ENCODE measurements at regions of chrX and their contacts with region 1.

Region 1: GRCh38 chrX:18674788-18675735 is 3.2 kb upstream of the RS1 start:
- DNase-seq: peak; percentile 77 to 92 (median 91)
- ATAC-seq: peak; percentile 94 to 96
- H3K4me3 ChIP-seq: peak overlapping the region; percentile 79
- H3K27ac ChIP-seq: peak overlapping the region; percentile 78
- H3K4me1 ChIP-seq: no peaks in the 10 kb centered on the region
- H3K27me3 ChIP-seq: no peaks in the 10 kb centered on the region

Region 2: GRCh38 chrX:18886344-18887161 is 211.5 kb after region 1 on chrX:
- intact Hi-C with region 1: loop called in 2 of 4 experiments (anchors 10 kb)
- DNase-seq: peak; percentile 85 to 90 (median 88)
- ATAC-seq: peak; percentile 84 to 89
- H3K4me3 ChIP-seq: peak overlapping the region; percentile 28
- H3K27ac ChIP-seq: peak overlapping the region; percentile 96
- H3K4me1 ChIP-seq: peaks cover 3% of the 10 kb centered on the region
- H3K27me3 ChIP-seq: no peaks in the 10 kb centered on the region

Measured in right cardiac atrium (tissue), 5 donors.